ENCODE measurements at regions of chr7 and their contacts with region 1.

Region 1: DNA sequence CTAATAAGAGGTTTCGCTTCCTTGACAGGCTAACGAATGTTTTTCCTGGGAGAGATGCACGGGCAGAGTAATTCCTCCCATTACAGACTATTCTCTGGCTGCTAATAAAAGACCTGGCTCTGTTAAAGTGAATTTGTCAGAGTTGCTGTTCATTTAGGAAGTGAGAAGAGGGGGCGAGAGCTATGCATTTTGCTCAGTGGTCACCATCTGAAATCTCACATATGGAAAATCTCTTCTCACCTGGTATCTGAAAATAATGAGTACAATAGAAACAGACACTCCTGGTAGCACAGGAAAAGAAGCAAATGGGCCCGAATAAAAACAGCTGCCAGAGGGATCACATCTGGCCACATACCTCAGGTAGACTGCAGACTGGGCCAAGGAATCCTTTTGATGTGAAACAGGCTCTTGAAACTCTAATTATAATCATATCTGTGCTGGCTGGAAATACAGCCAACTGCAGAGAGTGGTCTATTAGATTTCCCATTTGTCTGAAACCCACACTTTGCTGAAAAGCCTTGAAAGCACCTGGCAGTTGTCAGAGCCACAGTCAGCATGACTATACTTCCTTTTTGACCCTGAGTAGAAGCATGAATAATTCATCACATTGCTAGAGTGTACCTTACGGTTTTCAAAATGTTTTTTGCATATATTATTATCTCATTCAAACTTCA is 33.6 kb downstream of the AOAH start:
- DNase-seq: no peak
- ATAC-seq: no peak

Region 2: GRCh38 chr7:36644625-36645422 is 45.8 kb before region 1 on chr7:
- intact Hi-C with region 1: no loop called
- DNase-seq: no peak
- ATAC-seq: no peak

Region 3: DNA sequence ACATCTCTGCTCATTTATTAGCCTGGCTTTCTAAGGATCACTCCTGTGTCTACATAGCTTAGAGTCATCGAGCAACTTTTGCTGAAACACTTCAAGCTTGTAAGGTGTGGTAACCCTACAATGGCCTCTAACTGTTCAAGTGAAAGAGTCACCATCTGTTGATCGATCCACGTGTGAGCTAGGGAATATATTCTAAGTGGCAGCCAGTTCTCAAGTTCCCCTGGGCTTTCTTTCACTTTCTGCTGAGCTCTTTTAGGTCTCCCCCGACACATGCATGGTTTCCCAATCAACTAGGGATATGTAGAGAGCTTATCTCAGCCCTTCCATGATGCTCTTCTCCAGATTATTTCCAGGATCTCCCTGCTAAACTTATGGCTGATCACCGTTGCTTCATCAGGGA is 18.1 kb after region 1 on chr7:
- intact Hi-C with region 1: loop called (anchors 1 kb)
- DNase-seq: no peak
- ATAC-seq: no peak